AG04449 (cell line): ENCODE measurements at regions of chr5 and their contacts with region 1.

Region 1: DNA sequence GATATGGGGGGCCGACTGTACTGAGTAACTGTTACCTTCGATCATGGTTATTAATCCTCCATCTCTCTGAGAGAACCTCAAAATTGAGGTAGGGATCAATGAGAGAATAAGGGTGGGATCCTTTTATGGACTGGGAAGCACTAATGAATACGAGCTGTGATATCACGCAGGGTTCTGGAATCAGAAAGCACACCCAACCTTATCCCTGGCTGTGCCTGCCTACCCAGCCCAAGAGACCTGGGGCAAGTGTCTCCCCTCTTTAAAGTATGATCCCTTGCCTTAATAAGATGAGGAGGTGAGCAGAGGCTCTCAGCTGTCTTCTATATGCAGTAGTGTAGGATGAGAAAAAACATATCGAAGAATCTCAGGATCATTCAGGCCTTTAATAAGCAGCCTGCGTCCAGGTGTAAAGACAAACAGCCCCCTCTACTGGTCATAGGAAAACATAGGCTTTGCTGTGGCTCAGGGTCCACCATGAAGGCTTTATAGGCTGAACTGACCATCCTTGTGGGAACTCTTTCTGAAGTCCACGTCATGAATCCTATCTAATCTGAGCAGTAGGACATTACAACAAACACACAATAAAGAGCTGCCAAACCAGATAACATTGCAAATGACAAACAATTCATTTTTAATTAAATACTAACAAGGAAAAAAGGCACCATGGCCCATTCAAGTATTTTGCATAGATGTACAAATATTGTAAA is 16.8 kb downstream of the NIPAL4 start:
- DNase-seq: peak; percentile 29
- H3K4me3 ChIP-seq: no peak overlapping the region
- CTCF ChIP-seq: peak; percentile 73

Region 2: DNA sequence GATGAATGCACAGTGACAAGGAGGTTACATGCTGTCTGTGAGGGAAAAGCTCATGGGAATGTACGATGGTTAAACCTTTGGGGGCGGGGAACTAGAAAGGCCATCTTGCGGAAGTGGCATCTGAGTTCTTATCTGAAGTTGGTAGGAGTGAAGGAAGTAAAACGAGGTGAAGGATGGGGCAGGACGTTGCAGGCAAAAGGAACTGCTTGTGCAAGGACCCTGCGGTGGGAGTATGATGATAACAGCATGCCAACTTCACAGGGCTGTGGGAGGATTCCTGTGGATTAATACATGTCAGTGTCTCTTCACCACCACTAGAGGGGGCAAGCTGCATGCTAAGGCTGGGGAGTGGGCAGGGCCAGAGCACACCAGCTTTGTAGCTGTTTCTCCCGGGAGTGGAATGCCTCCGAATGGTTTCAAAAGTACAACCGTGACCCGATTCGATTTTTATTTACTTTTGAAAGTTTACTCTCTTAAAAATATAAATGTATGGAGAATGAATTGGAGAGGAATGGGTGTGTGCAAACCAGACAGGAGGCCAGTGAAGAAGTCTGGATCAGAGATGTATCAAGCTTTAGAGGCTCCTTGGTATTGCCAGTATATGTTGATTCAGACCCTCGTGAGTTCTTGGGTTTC is 148.5 kb before region 1 on chr5:
- CTCF ChIA-PET with region 1: interaction called, 272 read pairs
- POLR2A ChIA-PET with region 1: interaction called, 3 read pairs
- DNase-seq: peak; percentile 38
- H3K4me3 ChIP-seq: peak overlapping the region; percentile 35
- CTCF ChIP-seq: peak; percentile 93

Region 3: GRCh38 chr5:157342822-157343402 is 133.9 kb before region 1 on chr5:
- CTCF ChIA-PET with region 1: interaction called, 39 read pairs
- POLR2A ChIA-PET with region 1: no interaction called
- DNase-seq: no peak
- H3K4me3 ChIP-seq: no peak overlapping the region
- CTCF ChIP-seq: peak; percentile 58

Region 4: DNA sequence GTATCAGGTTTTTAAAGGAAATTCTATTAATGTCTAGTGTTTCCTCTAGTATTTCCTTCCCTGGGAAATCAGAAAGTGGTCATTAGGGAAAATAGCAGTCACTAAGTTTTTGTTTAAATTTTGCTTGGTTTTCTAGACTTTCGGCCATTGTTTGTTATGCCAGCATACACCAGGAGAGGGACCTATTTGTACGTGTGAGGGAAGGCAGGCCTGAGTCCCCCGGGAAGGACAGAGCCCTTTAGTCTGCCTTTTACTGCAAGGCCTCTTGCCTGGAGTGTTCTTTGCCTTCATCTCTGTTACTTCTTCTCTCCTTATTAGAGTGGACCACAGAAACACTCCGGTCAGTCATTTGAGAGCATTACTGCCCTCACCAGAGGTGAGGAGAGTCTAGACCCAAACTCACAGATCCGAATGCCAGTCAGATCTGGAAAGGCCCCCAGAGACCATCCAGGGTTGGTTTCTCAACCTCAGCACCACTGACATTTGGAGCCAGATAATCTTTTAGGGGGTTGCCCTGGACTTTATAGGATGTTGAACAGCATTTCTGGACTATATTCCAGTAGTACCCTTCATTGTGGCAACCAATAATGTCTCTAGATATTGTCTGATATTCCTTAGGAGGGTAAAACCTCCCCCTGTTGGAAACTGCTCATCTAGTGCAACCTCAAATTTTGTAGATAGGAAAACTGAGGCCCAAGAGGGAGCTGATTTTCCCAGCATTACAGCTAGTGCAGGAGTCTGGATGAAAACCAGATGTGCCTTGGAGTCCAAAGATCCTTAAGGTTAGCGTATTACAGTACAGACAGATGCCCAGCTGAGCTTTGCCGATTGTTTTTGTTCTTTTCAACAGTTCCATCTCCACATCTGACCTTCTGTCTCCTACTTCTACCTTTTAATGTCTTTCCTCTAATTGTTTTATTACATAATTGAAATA is 109.8 kb before region 1 on chr5:
- CTCF ChIA-PET with region 1: interaction called, 172 read pairs
- POLR2A ChIA-PET with region 1: no interaction called
- DNase-seq: peak; percentile 68
- H3K4me3 ChIP-seq: no peak overlapping the region
- CTCF ChIP-seq: peak; percentile 76

Region 5: DNA sequence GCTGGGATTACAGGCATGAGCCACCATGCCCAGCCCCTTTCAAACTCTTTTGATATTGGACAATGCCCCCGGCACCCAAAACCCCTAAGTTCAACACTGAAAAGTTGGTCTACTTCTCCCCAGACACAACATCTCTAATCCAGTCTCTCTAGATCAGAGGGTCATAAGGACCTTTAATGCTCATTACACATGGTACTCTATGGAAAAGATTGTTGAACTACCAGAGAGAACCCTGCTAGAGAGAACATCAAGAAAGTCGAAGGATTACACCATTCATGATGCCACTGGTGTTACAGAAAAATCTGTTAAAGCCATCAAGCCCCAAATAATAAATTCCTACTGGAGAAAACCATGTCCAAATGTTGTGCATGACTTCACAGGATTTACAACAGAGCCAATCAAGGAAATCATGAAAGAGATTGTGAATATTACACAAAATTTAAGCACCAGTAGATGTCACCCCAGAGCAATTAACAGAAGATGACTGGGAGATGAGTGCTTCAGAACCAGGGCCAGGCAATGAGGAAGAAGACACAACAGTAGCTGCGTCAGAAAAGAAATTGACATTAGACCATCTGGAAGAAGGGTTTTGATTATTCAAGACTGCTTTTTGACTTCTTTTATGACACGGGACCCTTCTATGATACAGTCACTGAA is 45.2 kb before region 1 on chr5:
- CTCF ChIA-PET with region 1: interaction called, 106 read pairs
- POLR2A ChIA-PET with region 1: no interaction called
- DNase-seq: peak; percentile 16
- H3K4me3 ChIP-seq: no peak overlapping the region
- CTCF ChIP-seq: peak; percentile 34